ENCODE measurements at regions of chr4 and their contacts with region 1.

Region 1: DNA sequence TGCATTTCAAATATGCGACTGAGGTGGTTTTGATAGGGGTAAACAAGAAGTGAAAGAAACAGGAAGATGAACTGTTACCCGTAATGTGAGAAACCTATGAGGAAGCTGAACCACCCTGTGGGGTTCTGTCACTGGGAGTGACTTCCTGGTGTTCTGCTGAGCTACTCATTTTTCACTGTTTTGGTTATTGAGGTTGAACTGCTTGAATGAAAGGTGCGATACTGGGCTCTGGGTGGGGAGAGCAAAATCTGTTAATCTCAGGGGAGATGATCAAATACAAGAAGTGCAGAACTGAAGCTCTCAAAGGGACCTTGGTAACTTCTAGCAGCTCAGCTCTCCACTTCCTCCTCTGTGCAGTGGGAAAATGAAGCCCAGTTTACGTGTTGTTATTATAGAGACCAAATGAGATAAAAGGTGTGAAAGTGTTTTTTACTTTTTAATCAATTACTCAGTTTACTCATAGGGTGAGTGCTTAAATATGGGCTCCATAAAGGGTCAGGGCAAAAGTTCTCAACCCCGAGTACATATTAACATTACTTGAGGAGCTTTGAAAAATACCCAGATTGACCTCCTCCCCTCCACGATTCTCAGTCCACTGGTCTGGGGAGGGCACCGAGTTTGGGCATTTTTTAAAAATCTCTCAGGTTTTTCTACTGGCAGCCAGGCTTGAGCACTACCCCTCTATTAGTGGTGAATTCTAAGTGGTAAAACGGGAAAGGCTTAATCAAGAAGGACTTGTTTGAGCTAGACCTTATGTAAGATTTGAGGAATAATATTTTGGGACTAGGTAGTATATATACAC is 66.7 kb downstream of the COQ2 start:
- DNase-seq: peak; percentile 95
- H3K4me3 ChIP-seq: peak overlapping the region; percentile 43
- H3K27ac ChIP-seq: peak overlapping the region; percentile 86
- H3K4me1 ChIP-seq: peaks cover 81% of the 10 kb centered on the region
- CTCF ChIP-seq: no peak

Region 2: DNA sequence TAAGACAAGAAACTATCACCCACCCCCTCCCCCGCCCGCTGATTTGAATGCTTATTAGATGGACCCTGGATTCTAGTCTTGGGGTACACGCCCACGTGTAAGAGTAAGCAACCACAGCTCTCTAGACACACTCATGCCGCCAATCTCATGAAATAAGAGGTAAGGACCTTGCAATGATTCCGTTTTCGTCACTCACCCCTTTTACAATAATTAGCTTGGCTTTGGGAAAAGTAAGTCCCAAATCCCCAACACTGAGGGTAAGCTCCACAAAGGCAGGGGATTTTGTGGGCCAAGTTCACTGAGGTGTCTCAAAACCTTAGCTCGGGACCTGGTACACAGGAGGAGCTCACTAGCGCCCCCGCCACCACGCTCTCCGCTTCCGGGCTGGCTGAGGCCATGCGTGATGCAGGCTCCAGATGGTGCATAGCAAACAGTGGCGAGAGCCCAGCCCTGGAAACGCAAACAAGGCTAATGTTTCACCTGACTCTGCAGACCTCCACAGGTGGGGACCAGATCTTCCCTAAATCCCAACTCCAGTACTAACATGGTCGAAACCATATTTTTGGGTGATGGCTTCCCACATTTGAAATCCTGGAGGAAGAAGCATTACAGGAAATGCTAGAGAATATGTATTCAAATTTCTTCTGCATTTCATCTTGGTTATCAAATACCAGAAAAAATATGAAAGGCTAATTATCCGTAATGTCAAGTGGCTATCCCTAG is 107.5 kb before region 1 on chr4:
- CTCF ChIA-PET with region 1: no interaction called
- POLR2A ChIA-PET with region 1: interaction called, 6 read pairs
- intact Hi-C with region 1: loop called (anchors 1 kb)
- DNase-seq: peak; percentile 93
- H3K4me3 ChIP-seq: peak overlapping the region; percentile 58
- H3K27ac ChIP-seq: peak overlapping the region; percentile 25
- H3K4me1 ChIP-seq: peaks cover 37% of the 10 kb centered on the region
- CTCF ChIP-seq: peak; percentile 91

Region 3: GRCh38 chr4:83240379-83240875 is 22.5 kb after region 1 on chr4:
- CTCF ChIA-PET with region 1: interaction called, 4 read pairs
- POLR2A ChIA-PET with region 1: interaction called, 18 read pairs
- intact Hi-C with region 1: loop called (anchors 1 kb)
- DNase-seq: peak; percentile 91
- H3K4me3 ChIP-seq: peak overlapping the region; percentile 53
- H3K27ac ChIP-seq: peak overlapping the region; percentile 90
- H3K4me1 ChIP-seq: peaks cover 68% of the 10 kb centered on the region
- CTCF ChIP-seq: no peak

Measured in OCI-LY7 (cell line).